ENCODE measurements at regions of chr7 and their contacts with region 1.

Region 1: GRCh38 chr7:16918288-16918895 is 36.6 kb upstream of the AGR3 start:
- DNase-seq: peak; percentile 26 to 40 (median 39)
- ATAC-seq: no peak
- H3K4me3 ChIP-seq: no peak overlapping the region
- H3K27ac ChIP-seq: no peak overlapping the region
- H3K4me1 ChIP-seq: peaks cover 10% of the 10 kb centered on the region
- H3K27me3 ChIP-seq: no peaks in the 10 kb centered on the region
- CTCF ChIP-seq: peak; percentile 51 to 82 (median 66)
- POLR2A ChIP-seq: no peak

Region 2: GRCh38 chr7:16695621-16696237 is 222.7 kb before region 1 on chr7:
- intact Hi-C with region 1: loop called (anchors 10 kb)
- DNase-seq: peak; percentile 45 to 52 (median 47)
- ATAC-seq: peak; percentile 77
- H3K4me3 ChIP-seq: no peak overlapping the region
- H3K27ac ChIP-seq: no peak overlapping the region
- H3K4me1 ChIP-seq: no peaks in the 10 kb centered on the region
- H3K27me3 ChIP-seq: no peaks in the 10 kb centered on the region
- CTCF ChIP-seq: peak in 6 of 7 experiments; percentile 43 to 70 (median 60)
- POLR2A ChIP-seq: no peak

Region 3: DNA sequence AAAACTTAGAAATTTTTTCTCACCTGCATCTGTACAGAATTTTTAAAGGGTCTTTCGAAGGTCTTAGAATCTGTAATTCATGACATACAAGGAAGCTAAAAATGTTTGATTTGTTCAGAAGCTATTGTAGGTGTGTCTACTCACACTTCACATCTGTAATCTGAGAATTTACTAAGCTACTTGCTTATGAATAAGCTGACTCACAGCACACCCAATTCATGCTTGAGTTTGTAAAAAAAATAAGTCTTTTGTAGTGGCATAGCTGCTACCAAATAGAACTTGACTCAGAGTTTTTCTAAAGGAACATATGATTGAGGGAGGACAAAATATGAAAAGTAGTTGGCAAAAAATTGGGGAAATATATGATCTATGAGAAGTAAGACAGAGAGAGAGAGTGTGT is 100.9 kb before region 1 on chr7:
- intact Hi-C with region 1: loop called (anchors 10 kb)
- DNase-seq: no peak
- ATAC-seq: no peak
- H3K4me3 ChIP-seq: no peak overlapping the region
- H3K27ac ChIP-seq: no peak overlapping the region
- H3K4me1 ChIP-seq: peaks cover 18% of the 10 kb centered on the region
- H3K27me3 ChIP-seq: no peaks in the 10 kb centered on the region
- CTCF ChIP-seq: no peak
- POLR2A ChIP-seq: no peak

Measured in body of pancreas (tissue), 4 donors.